Activated B cell treated with CpG ODN at 0.5 μM for 24 hours (primary cell): ENCODE measurements at regions of chr4 and their contacts with region 1.

Region 1: DNA sequence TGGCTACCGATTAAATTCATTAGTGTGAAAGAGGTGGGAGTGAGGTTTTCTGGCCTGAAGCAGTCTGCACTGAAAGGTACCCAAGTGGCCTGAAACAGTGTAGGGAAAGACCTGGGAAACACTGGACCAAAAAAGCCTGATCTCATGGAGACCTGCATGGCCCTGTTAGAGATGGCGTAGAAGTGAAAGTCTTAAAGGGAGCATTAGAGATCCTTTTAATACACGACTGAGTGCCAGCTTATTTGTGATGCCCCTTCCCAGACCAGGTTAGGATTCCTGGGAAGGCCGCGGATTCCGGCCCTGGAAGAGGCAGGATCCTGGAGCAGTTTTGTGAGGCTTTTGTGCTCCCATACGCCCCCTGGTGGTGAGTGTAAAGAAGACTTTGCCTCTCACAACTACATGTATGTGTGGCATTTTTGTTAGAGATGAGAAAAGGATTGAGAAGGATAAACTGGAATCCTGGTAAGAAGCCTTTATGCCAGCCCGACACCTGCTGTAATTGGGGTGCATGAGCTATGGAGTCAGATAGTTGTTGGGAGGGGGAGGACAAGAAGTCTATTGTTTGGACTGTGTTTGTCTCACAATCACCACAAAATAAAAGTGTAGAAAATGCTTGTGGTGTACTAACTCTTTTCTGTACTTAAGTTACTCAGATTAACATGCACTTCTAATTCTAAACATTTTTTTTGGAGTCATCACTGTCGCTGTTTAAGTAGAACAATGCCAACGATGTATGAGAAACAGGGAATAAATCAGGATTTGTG is 54.0 kb downstream of the JADE1 start:
- DNase-seq: peak; percentile 48
- ATAC-seq: peak; percentile 38
- H3K4me3 Mint-ChIP-seq: no peak overlapping the region
- H3K27ac Mint-ChIP-seq: peak overlapping the region; percentile 62
- H3K4me1 Mint-ChIP-seq: peaks cover 37% of the 10 kb centered on the region
- H3K27me3 Mint-ChIP-seq: no peaks in the 10 kb centered on the region
- CTCF ChIP-seq: peak; percentile 60

Region 2: DNA sequence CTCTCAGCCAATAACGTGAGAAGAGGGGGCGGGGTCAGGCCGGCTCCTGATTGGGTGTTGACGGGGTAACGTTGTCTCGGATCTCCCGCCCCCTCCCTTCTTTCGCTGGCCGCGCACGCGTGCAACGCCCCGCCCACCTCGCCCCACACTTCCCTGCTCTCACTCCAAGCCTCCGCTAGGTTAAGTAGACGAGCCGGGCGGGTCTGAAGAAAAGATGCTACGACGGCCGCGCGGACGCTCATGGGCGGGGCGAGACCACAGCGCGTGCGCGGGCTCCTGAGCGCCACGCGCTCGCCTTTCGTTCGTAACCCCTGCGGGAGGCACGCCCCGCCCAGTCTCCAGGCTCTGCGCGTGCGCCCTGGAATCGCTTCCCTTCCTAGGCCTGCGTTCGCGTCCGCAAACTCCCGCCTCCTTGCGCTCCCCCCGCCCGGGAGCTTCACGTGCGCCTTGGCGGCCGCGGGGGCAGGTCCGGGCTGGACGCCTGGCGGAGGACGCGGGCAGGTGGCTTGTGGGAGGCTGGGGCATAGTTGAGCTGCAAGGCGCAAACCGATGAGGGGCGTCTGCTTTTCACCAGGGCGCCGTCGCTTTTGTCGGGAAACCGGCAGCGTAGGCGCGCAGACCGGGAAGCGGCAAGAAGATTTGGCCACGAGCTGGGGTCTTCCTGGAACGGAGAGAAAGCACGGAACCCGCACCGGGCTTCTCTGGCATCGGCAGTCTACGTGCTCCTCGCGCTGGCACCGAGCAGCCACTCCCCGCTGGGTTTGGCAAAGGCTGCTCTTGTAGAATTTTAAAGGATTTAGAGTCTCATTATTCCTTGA is 575.4 kb before region 1 on chr4:
- CTCF ChIA-PET with region 1: no interaction called
- POLR2A ChIA-PET with region 1: no interaction called
- intact Hi-C with region 1: loop called (anchors 5 kb)
- DNase-seq: peak; percentile 97
- ATAC-seq: peak; percentile 88
- H3K4me3 Mint-ChIP-seq: peak overlapping the region; percentile 83
- H3K27ac Mint-ChIP-seq: peak overlapping the region; percentile 80
- H3K4me1 Mint-ChIP-seq: peaks cover 29% of the 10 kb centered on the region
- H3K27me3 Mint-ChIP-seq: no peaks in the 10 kb centered on the region
- CTCF ChIP-seq: no peak

Region 3: GRCh38 chr4:128565565-128566186 is 297.8 kb before region 1 on chr4:
- CTCF ChIA-PET with region 1: no interaction called
- POLR2A ChIA-PET with region 1: no interaction called
- intact Hi-C with region 1: loop called (anchors 2 kb)
- DNase-seq: no peak
- ATAC-seq: no peak
- H3K4me3 Mint-ChIP-seq: no peak overlapping the region
- H3K27ac Mint-ChIP-seq: no peak overlapping the region
- H3K4me1 Mint-ChIP-seq: no peaks in the 10 kb centered on the region
- H3K27me3 Mint-ChIP-seq: peaks cover 6% of the 10 kb centered on the region
- CTCF ChIP-seq: no peak

Region 4: GRCh38 chr4:128675083-128675482 is 188.4 kb before region 1 on chr4:
- CTCF ChIA-PET with region 1: no interaction called
- POLR2A ChIA-PET with region 1: no interaction called
- intact Hi-C with region 1: no loop called
- DNase-seq: no peak
- ATAC-seq: peak; percentile 73
- H3K4me3 Mint-ChIP-seq: peak overlapping the region; percentile 55
- H3K27ac Mint-ChIP-seq: peak overlapping the region; percentile 71
- H3K4me1 Mint-ChIP-seq: peaks cover 25% of the 10 kb centered on the region
- H3K27me3 Mint-ChIP-seq: no peaks in the 10 kb centered on the region
- CTCF ChIP-seq: no peak

Region 5: DNA sequence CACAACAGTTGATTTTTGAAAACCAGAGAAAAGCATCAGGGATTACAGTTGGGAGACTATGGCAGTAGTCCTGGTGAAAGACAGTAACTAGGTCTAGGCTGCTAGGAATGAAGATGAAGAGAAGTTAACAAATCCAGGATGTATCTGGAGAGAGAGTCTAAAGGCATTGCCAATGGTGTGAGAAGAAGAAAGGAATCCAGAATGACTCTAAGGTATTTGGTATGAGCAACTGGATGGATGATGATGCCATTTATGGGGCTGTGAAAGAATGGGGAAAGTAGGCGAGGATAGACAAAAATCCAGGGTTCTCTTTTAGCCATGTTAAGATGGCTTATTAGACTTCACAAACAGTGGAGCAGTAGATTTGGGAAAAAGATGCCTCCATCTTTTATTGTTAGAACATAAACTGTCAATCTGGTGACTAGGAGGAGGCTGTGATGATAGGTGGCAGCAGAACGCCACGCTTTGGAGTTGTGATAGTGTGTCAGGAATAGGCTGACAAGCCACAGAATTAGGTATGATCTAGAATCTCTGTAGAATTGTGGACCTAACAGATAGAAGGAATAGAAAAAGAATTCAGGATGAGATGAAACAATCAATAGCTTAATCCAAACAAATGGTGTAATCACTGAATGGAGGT is 81.3 kb before region 1 on chr4:
- CTCF ChIA-PET with region 1: interaction called, 14 read pairs
- POLR2A ChIA-PET with region 1: no interaction called
- intact Hi-C with region 1: loop called (anchors 1 kb)
- DNase-seq: peak; percentile 19
- ATAC-seq: peak; percentile 49
- H3K4me3 Mint-ChIP-seq: no peak overlapping the region
- H3K27ac Mint-ChIP-seq: no peak overlapping the region
- H3K4me1 Mint-ChIP-seq: no peaks in the 10 kb centered on the region
- H3K27me3 Mint-ChIP-seq: peaks cover 1% of the 10 kb centered on the region
- CTCF ChIP-seq: no peak